Activated T-helper 2 cell treated with anti-CD3 and anti-CD28 coated beads, Interferon-gamma antibody, Interleukin-2, Interleukin-4, amounts not matched to agents 10 μg/mL and 5 μg/mL and 100 μg/mL, durations not matched to agents 14 hours and 24 hours and 36 hours (primary cell): ENCODE measurements at regions of chr3 and their contacts with region 1.

Region 1: DNA sequence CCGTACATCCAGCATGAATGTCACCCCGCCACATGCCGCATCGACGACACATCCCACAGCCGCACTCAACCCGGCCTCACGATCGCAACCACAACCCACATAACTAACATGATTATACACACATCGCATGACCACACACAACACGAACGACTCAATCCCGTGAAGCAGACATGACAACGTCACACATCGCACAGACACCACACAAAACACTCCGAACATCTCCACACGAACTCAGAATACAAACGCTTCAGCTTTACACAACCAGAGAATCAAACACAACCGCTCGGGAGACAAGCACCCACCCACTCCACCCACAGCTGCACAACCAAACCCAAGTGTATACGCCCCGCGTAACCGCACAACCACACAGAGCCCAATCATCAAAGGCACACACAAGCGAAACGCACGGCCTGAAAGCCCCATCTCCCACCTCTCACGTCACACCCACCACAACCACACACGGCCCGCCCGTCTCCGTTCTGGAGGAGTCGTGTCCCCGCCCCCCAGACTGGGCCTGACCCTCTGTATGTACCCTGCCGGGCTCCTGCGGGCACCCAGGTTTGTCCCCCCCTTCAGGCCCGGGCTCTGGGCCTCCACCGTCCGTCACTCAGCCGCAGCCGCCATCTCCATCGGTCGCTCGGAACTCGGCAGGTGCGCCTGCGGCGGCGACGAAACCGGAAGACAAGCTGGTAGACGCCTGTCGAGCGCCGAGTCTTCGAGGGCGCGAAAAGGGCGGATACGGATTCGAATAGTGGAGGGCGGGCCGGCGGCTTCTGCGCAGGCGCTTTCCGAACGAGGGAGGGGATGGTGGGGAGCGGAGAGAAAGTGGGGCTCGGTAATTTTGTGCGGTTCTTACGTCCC is at the start of gene RBSN:
- DNase-seq: peak; percentile 96
- H3K4me3 Mint-ChIP-seq: peak within 1 kb of the TSS; percentile 91
- H3K27ac Mint-ChIP-seq: peak within 1 kb of the TSS; percentile 94
- H3K4me1 Mint-ChIP-seq: peaks cover 12% of the 10 kb centered on the region
- H3K27me3 Mint-ChIP-seq: peaks cover 2% of the 10 kb centered on the region
- total RNA-seq, gene RBSN: 11.3 and 13.0 TPM in 2 replicates

Region 2: GRCh38 chr3:14651440-14652251 is 447.1 kb before region 1 on chr3 and contains the start of gene CCDC174:
- intact Hi-C with region 1: loop called (anchors 1 kb)
- DNase-seq: peak; percentile 94
- H3K4me3 Mint-ChIP-seq: peak within 1 kb of the TSS; percentile 92
- H3K27ac Mint-ChIP-seq: peak within 1 kb of the TSS; percentile 95
- H3K4me1 Mint-ChIP-seq: peaks cover 30% of the 10 kb centered on the region
- H3K27me3 Mint-ChIP-seq: no peaks in the 10 kb centered on the region
- total RNA-seq, gene CCDC174: 15.0 and 18.8 TPM in 2 replicates

Region 3: GRCh38 chr3:15055019-15055557 is 43.6 kb before region 1 on chr3:
- intact Hi-C with region 1: loop called (anchors 2 kb)
- DNase-seq: peak; percentile 46
- H3K4me3 Mint-ChIP-seq: peak overlapping the region; percentile 2
- H3K27ac Mint-ChIP-seq: peak overlapping the region; percentile 79
- H3K4me1 Mint-ChIP-seq: peaks cover 28% of the 10 kb centered on the region
- H3K27me3 Mint-ChIP-seq: no peaks in the 10 kb centered on the region

Region 4: DNA sequence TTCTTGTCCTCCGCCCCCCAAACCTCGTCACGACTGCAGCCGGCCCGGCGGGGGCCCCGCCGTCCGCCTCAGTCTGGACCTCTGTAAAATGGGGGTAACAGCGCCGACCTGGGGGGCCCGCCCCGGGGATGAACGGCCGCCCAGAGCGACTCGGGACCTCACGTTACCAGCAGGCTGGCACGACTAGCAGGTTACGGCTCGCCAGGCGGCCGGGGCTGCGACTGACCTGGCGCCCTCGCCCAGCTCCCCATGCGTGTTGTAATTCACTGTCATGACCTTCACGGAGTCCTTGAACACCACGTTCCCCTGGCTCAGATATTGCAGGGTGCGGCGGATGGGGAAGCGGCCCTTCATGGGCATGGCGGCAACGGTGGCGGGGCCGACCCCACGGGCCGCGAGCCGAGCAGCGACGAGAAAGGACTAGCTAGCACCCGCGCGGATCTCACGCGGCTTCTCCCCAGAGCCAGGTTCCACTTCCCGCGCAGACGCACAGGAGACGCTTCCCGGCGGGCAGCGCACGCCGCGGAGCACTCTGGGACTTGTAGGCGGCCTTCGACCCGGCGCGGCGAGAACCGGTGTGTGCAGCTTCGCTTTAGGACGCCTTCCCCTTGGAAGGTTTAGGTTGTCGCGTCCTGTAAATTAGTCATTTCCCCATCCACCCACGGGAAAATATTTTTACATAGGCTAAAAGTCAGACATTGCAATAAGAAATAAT is 33.7 kb before region 1 on chr3 and contains the start of gene MRPS25:
- intact Hi-C with region 1: loop called (anchors 1 kb)
- DNase-seq: peak; percentile 88
- H3K4me3 Mint-ChIP-seq: peak within 1 kb of the TSS; percentile 94
- H3K27ac Mint-ChIP-seq: peak within 1 kb of the TSS; percentile 93
- H3K4me1 Mint-ChIP-seq: peaks cover 20% of the 10 kb centered on the region
- H3K27me3 Mint-ChIP-seq: no peaks in the 10 kb centered on the region
- total RNA-seq, gene MRPS25: 83.9 and 91.6 TPM in 2 replicates

Region 5: DNA sequence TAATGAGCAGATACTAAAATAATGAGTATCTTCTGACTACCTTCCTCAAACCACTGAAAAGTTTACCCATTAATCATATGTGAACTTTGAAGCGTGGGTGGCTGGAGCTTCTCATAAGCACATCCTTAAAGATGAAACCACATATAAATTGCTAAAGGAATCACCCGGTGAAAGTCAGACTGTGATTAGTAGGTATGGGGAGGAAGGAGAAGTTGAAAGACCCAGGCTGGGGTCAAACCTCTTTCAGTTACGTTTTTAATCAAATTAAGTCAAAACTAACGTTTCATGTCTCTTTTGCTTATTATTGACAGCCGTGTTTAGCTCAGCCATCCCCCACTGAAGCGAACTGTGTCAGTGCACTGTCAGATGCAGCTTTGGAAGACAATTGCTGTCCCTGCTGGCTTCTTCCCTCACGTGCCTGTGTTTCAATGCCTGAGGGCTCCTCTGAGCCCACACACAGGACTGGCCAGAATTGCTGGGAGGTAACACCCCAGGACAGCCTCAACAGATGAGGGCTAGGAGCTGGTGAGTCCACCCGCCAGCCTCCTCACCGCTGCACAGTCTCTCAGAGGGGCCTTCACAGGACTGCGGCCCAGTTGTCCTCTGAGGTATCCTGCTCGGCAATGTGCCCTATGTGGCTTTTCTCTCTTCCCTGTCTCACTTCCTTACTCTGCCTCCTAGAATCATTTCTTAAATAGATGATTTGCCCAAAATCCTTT is 262.9 kb after region 1 on chr3:
- intact Hi-C with region 1: loop called (anchors 1 kb)
- DNase-seq: peak; percentile 36
- H3K4me3 Mint-ChIP-seq: peak overlapping the region; percentile 30
- H3K27ac Mint-ChIP-seq: peak overlapping the region; percentile 81
- H3K4me1 Mint-ChIP-seq: peaks cover 36% of the 10 kb centered on the region
- H3K27me3 Mint-ChIP-seq: no peaks in the 10 kb centered on the region